ENCODE measurements at regions of chr12 and their contacts with region 1.

Region 1: DNA sequence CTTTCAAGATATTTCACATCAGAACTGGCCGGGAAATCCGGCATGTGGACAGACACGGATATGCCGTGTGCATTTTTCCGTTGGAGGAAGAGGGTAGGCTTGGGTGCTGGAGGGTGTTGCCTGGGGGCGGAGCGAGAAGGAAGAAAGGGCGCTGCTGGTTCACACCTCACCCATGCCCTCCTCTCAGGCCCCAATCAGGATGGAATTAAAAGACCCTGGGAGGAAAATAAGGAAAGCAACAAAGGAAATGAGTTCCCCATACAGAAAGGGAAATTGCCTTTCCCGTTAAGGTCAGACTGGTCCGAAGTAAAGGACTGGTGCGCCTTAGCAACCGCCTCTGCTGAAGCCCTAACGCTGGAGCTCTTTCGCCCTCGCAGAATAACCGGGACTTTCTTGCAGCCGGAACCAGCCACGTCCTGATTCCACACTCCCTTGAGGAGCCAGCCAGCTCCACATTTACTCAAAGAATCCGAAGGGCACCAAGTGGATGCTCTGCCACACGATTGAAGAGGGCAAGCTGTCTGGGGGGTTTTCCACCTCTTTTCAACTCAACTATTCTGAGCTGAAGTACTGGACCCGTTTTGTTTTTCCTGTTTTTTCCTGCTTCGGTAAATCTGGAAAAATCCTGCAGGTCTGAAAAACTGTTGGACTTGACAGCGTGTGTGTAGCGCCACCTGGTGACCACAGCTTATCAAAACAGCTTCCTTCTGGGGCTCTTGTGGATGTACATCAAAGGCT is 37.7 kb upstream of the BCL2L14 start:
- DNase-seq: peak; percentile 78 to 89 (median 82)
- ATAC-seq: peak; percentile 94
- H3K4me3 ChIP-seq: peak overlapping the region; percentile 30 to 37
- H3K27ac ChIP-seq: peak overlapping the region; percentile 57 to 72
- H3K4me1 ChIP-seq: peaks cover 0 to 11% of the 10 kb centered on the region in 2 donors
- H3K27me3 ChIP-seq: no peaks in the 10 kb centered on the region
- CTCF ChIP-seq: peak; percentile 79 to 86

Region 2: DNA sequence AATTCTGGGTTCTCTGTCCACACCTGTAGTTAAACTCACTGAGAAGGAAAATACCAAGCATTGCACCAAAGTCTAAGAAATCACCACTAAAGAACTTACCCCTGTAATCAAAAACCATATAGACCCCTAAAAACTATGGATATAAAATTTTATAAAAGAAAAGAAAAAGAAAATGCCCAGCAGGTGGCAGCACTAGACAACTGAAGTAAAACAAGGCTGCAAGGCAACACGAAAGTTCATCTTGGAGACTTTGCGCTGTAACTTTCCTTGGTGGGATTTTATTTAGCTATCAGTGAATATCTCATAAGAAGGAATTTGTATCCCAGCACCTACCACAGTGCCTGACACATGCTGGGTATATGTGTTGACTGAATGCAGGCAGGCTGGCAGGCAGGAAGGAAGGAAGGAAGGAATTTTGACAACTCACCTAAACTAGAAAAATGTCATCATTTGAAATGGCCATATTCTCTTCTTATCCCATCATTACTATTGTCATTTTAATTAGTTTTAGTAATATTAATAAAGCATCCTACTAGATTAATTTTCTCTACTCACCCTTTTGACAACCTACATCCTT is 451.8 kb before region 1 on chr12:
- intact Hi-C with region 1: loop called (anchors 5 to 10 kb)
- DNase-seq: peak in 3 of 4 donors; percentile 47 to 82 (median 64)
- ATAC-seq: peak; percentile 51
- H3K4me3 ChIP-seq: no peak overlapping the region
- H3K27ac ChIP-seq: no peak overlapping the region
- H3K4me1 ChIP-seq: peaks cover 6 to 17% of the 10 kb centered on the region in 2 donors
- H3K27me3 ChIP-seq: no peaks in the 10 kb centered on the region
- CTCF ChIP-seq: peak; percentile 42 to 54

Region 3: DNA sequence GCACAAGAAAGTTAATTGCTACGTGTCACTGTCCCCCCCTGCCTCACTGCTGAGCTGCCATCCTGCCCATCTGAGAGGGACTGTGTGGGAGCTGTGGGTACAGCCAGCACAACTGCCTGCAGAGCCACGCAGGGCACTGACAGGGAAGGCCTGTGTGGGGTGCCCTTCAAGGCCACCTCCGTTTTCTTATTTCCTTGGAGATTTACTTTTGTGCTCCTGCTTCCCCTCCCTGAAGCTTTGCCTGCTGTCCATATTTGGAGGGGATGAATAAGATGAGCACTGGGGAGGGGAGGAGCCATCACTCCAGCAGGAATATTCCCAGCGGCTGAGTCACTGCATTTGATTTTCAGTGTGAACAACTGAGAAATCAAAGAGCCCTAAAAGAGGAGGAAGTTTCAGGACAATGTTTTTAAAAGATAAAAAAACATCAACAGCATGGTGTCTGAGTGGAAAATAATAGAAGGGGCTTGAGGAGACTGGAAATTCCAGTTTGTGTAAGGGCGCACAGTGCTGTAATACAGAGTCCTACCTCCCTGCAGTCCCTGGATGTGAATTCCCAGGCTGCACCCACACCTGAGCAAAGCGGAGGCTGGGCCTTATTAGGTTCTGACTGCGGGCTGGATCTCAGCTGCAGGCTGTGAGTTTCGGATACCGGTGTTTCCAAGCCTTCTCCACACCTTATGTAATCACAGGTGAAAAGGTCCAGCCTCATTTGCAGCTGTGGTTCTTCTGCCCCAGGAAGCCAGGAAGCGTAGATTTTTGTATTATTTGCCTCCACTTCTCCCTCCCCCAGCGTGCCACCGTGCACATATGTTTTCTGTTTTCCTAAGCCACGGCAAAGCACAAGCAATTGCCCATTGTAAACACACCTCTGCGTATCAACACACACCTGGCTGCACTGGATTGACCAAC is 154.9 kb before region 1 on chr12:
- intact Hi-C with region 1: no loop called
- DNase-seq: peak in 1 of 4 donors; percentile 36
- ATAC-seq: peak; percentile 80
- H3K4me3 ChIP-seq: no peak overlapping the region
- H3K27ac ChIP-seq: peak overlapping the region; percentile 55 to 63
- H3K4me1 ChIP-seq: peaks cover 12 to 62% of the 10 kb centered on the region in 2 donors
- H3K27me3 ChIP-seq: no peaks in the 10 kb centered on the region
- CTCF ChIP-seq: no peak

Region 4: DNA sequence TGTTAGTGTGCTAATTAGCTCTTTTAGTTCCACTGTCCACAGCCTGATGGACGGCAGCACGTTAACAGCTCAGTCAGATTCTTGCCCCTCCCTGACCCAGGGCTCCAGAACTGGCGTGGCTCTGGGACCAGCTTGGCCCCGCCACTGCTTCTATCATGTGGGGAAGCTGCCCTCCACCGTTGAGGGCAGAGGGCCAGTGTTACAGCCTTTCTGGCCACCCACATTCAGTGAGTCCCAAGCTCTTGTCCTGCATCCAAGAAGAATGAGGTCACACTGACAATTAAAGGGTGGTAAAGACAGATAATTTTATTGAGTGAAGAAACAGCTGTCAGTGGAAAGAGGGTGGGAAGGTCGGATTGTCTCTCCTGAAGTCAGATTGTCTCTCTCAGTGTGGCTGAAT is 74.7 kb after region 1 on chr12:
- intact Hi-C with region 1: no loop called
- DNase-seq: no peak
- ATAC-seq: no peak
- H3K4me3 ChIP-seq: no peak overlapping the region
- H3K27ac ChIP-seq: no peak overlapping the region
- H3K4me1 ChIP-seq: no peaks in the 10 kb centered on the region
- H3K27me3 ChIP-seq: no peaks in the 10 kb centered on the region
- CTCF ChIP-seq: no peak

Region 5: DNA sequence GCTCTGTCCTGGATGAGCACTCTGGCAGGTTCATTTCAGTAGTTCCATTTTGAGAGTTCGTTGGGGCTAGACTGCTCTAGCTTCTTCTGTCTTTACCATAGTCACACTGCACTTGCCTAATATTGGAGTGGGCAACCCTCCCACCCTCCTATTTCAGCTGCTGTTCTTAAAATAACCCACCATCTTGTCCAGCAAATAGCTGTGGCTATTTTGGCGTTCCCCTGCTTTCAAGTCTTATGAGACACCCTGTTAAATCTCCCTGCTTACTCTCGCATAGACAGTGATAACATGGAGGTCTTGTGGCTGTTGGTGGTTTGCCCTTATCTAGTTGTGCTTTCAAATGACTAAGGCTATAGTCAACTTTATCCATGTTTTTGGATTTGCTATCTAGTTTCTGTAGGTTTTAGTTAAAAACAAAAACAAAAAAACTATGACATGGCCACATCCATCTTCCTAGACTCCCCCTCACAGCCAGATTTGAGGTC is 168.3 kb after region 1 on chr12:
- intact Hi-C with region 1: no loop called
- DNase-seq: no peak
- ATAC-seq: no peak
- H3K4me3 ChIP-seq: no peak overlapping the region
- H3K27ac ChIP-seq: no peak overlapping the region
- H3K4me1 ChIP-seq: no peaks in the 10 kb centered on the region
- H3K27me3 ChIP-seq: no peaks in the 10 kb centered on the region
- CTCF ChIP-seq: no peak